SK-N-SH (cell line): ENCODE measurements at regions of chr1 and their contacts with region 1.

Region 1: DNA sequence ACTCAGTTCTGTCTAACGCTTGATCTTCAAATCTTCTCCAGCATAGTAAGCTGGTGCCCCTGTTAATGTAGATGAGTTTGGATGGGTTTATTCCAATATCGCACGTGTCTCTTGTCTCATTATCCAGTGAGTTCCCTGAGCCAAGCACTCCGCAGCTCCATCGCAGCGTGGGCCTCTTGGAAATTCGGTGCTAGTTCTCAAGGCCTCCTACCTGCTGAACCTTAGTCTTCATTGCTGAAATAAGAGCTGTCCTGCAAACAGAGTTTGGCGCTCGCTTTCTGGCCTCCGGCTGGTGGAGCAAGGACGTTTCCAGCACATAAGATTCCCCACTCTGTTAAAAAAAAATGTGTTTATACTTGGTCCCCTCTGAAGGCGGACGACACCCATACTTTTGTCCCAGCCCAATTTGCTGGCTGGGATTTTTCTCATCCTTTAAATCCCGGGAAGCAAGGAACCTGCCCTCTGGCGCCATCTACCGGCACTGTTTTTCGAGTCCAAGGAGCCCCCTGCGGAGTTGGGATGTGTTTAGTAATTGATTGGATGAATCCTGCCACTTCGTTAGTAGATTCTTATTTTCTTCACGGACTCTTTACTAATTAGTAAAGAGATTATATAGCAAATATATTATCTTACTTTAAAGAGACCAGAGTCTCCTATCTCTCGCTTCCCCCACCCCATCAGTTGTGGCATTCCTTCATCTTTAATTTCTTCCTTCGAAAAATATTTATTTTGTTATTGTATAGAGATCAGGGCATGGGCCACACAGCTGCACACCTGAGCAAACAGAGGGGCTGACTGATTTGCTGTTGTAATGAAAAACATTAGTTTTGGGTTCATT is 14.7 kb downstream of the JUN start:
- DNase-seq: peak; percentile 73
- H3K4me3 ChIP-seq: no peak overlapping the region; a peak in 1 of 4 replicates
- H3K27ac ChIP-seq: peak overlapping the region; percentile 53 to 65; a peak in 3 of 4 replicates
- H3K4me1 ChIP-seq: peaks cover 0 to 26% of the 10 kb centered on the region in 2 experiments
- H3K27me3 ChIP-seq: no peaks in the 10 kb centered on the region
- CTCF ChIP-seq: peak; percentile 91
- EP300 ChIP-seq: no peak
- RAD21 ChIP-seq: peak; percentile 75

Region 2: DNA sequence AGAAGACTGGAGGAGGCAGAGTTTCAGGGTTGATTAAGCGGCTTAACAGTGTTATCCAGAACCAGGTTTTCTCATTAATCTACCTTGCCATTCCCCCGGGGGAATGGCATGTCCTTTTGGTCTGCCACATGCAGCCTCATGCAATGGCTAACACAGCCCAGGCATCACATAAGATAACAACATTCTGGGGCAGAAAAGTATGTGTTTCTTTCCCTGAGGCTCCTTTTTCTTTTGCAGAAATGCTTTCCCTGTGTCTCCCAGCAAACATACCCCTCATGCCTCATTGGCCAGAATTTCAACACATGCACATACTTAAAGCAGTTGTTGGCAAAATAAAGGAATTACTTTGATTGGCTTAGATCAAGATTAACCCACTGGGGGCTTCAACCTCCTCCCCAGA is 321.3 kb before region 1 on chr1:
- CTCF ChIA-PET with region 1: no interaction called
- POLR2A ChIA-PET with region 1: no interaction called
- DNase-seq: peak; percentile 36
- H3K4me3 ChIP-seq: no peak overlapping the region
- H3K27ac ChIP-seq: no peak overlapping the region
- H3K4me1 ChIP-seq: peaks cover 0 to 4% of the 10 kb centered on the region in 2 experiments; a peak in 2 of 4 replicates
- H3K27me3 ChIP-seq: no peaks in the 10 kb centered on the region
- CTCF ChIP-seq: no peak
- EP300 ChIP-seq: no peak
- RAD21 ChIP-seq: no peak

Region 3: GRCh38 chr1:58753431-58753866 is 15.7 kb before region 1 on chr1:
- CTCF ChIA-PET with region 1: interaction called, 13 read pairs
- POLR2A ChIA-PET with region 1: no interaction called
- DNase-seq: no peak
- H3K4me3 ChIP-seq: no peak overlapping the region
- H3K27ac ChIP-seq: peak overlapping the region in 1 of 2 experiments; percentile 95; a peak in 2 of 4 replicates
- H3K4me1 ChIP-seq: peaks cover 0 to 40% of the 10 kb centered on the region in 2 experiments
- H3K27me3 ChIP-seq: no peaks in the 10 kb centered on the region
- CTCF ChIP-seq: no peak
- EP300 ChIP-seq: no peak
- RAD21 ChIP-seq: no peak

Region 4: DNA sequence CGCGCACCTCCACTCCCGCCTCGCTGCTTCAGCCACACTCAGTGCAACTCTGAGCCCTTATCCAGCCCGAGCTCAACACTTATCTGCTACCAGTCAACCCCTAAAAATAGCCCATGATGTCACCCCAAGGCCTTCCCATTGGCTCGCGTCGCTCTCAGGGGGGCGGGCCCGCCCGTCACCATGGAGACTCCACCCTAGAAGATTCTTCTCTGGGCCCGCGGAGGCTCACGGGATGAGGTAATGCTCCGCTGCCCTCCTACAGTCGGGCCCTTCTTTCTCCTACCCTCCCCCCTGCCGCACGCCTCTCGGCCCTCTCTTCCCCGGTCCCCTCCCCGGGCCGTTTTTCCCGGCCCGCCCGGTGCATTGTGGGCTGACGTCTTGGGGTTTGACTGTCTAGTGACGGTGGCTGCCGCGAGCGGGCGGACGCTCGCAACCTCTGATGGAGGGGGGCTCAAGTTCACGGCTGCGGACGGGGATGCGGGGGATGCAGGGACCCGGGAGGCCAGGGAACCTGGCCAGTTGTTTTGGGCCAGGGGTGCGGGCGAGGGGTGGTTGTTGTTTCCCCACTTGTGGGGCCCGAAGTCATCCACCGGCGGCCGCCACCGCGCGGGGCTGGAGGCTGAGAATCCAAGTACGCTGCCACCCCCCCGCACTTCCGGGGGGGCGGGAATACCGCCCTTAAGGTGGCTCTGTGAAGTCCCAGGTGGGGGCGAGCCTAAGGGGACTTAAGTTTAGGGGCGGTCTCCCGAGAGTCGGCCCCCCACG is 15.0 kb after region 1 on chr1 and contains the start of gene JUN:
- CTCF ChIA-PET with region 1: interaction called, 31 read pairs
- POLR2A ChIA-PET with region 1: interaction called, 3 read pairs
- DNase-seq: peak; percentile 96
- H3K4me3 ChIP-seq: peak within 1 kb of the TSS; percentile 86 to 89
- H3K27ac ChIP-seq: peak within 1 kb of the TSS; percentile 93 to 98
- H3K4me1 ChIP-seq: peaks cover 5 to 25% of the 10 kb centered on the region in 2 experiments; a peak in 2 of 4 replicates
- H3K27me3 ChIP-seq: no peaks in the 10 kb centered on the region
- CTCF ChIP-seq: no peak
- EP300 ChIP-seq: no peak
- RAD21 ChIP-seq: no peak
- polyA plus RNA-seq, gene JUN: 54.6 and 66.5 TPM in 2 replicates